HepG2 (cell line): ENCODE measurements at regions of chr9 and their contacts with region 1.

Region 1: DNA sequence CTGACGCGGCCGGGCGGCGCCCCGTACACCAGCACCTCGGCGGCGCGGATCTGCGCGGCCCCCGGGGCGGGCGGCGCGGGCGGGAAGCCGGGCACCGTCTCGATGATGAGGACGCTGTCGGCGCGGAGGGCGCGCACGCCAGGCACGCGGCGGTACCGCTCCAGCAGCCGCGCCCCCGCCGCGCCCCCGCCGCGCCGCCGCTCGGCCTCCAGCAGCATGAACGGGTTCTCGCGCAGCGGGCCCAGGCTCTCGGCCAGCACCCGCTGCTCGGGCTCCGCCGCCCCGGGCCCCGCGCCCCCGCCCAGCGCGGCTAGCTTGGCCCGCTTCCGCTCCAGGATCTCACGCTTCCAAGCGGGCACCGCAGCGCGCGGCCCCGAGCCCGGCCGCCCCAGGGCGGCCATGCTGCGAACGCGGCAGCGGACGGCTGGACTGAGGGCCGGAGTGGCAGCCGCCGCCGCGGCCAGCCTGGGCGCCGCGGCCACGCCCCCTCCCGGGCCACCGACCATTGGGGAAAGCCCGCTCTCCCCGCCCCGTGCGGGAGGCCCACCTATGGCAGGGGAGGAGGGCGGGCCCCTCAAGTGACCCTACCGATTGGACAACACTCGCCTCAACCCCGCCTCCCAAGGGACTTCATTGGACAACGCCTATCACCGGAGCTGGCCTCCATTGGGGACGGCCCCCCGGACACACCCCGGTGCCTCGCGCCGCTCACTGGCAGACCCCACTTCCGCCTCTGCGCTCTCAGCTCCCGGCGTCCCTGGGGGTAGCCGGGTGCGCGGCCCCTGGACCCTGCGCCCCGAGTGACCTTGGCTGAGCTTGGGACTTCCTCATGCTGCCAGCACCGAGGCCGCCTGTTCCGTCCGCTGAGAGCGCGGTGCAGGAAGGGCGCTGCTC is at the start of gene TPRN:
- DNase-seq: peak; percentile 99
- ATAC-seq: peak; percentile 87
- H3K4me3 ChIP-seq: peak within 1 kb of the TSS; percentile 71 to 78 (median 72)
- H3K27ac ChIP-seq: peak within 1 kb of the TSS; percentile 96
- H3K4me1 ChIP-seq: peaks cover 71% of the 10 kb centered on the region
- H3K27me3 ChIP-seq: no peaks in the 10 kb centered on the region; a peak in 1 of 5 replicates
- CTCF ChIP-seq: no peak
- EP300 ChIP-seq: 0 out of 4 replicates have a peak, but pooled peaks of 1 of the 2 experiments have one; percentile 15
- POLR2A ChIP-seq: peak in 1 of 2 experiments; percentile 77; a peak in 2 of 4 replicates
- RAD21 ChIP-seq: no peak; the same call in 1 of the 2 replicates
- total RNA-seq, gene TPRN: 17.5 and 19.2 TPM in 2 replicates

Region 2: DNA sequence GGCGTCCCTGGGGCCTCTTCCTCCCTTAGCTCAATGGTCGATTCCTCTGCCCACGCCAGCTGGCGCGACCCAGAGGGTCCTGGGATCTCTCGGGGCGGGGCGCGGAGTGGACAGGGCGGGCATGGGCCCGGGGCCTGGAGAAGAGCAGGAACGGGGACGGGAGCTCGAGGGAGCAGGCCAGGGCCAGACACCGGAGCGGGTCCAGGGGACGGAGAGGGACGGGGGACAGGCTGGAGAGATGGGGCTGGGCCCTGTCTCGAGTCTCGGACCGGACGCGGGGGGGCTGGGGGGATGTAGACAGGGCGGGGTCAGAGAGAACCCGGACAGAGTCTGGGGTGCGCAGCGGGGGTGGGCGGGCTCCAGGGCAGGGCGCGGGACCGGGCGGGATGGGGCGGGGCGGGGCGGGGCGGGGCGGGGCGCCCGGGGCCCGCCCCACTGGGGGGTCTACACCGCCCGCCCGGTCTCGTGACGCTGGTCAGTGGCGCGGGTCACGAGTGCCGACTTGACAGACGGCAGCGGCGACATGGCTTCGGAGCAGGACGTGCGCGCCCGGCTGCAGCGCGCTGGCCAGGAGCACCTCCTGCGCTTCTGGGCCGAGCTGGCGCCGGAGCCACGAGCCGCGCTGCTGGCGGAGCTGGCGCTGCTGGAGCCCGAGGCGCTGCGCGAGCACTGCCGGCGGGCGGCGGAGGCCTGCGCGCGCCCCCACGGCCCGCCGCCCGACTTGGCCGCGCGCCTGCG is 123.4 kb before region 1 on chr9 and contains the start of gene UAP1L1:
- CTCF ChIA-PET with region 1: no interaction called
- POLR2A ChIA-PET with region 1: no interaction called
- in situ Hi-C with region 1: no loop called
- intact Hi-C with region 1: no loop called
- DNase-seq: no peak
- ATAC-seq: peak; percentile 66
- H3K4me3 ChIP-seq: peak within 1 kb of the TSS; percentile 64 to 85 (median 76); a peak in 5 of 6 replicates
- H3K27ac ChIP-seq: peak within 1 kb of the TSS; percentile 43
- H3K4me1 ChIP-seq: peaks cover 42% of the 10 kb centered on the region
- H3K27me3 ChIP-seq: no peaks in the 10 kb centered on the region
- CTCF ChIP-seq: 0 out of 2 replicates have a peak, but pooled peaks have one; percentile 4
- EP300 ChIP-seq: no peak
- POLR2A ChIP-seq: no peak
- RAD21 ChIP-seq: peak; percentile 29; the same call in 1 of the 2 replicates
- total RNA-seq, gene UAP1L1: 6.2 and 6.4 TPM in 2 replicates

Region 3: DNA sequence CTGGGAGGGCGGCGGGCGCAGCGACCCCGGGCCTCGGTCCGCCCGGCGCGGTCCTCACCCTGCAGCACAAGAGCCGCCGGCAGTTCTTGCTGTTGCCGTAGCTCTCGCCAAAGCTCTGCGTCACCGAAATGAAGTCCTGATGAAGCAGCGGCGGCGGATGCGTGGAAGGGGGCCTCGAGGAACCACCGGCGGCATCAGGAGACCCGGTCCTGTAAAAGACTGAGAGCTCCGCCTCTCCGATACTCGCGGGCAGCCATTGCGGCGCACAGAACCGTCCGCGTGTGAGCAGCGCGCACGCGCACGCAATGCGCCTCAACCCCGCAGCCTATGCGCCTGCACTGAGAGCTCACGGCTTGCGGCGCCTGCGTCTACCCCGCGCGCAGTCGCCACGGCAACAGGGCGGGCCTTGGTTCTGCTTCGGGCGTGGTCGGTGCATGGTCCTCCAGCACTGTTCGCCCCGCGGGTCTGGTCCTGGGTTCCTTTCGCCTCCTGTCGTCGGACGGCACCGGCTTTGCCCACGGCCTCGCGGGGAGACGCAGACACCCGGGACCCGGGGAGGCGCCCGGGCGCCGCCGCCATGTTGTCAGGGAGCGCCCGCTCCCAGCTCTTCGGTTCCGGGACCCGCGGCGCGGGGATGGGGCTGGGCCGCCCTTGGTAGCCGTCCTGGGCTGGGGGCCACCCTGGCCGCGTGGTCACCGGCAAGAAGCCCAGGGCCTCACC is 70.9 kb before region 1 on chr9:
- CTCF ChIA-PET with region 1: no interaction called
- POLR2A ChIA-PET with region 1: interaction called, 22 read pairs
- in situ Hi-C with region 1: no loop called
- intact Hi-C with region 1: no loop called
- DNase-seq: peak; percentile 81
- ATAC-seq: peak; percentile 95
- H3K4me3 ChIP-seq: peak overlapping the region; percentile 75 to 90 (median 85)
- H3K27ac ChIP-seq: peak overlapping the region; percentile 82
- H3K4me1 ChIP-seq: peaks cover 24% of the 10 kb centered on the region
- H3K27me3 ChIP-seq: no peaks in the 10 kb centered on the region
- CTCF ChIP-seq: no peak; the same call in 1 of the 2 replicates
- EP300 ChIP-seq: no peak; a peak in 1 of 4 replicates
- POLR2A ChIP-seq: peak; percentile 73 to 91
- RAD21 ChIP-seq: peak; percentile 39

Region 4: DNA sequence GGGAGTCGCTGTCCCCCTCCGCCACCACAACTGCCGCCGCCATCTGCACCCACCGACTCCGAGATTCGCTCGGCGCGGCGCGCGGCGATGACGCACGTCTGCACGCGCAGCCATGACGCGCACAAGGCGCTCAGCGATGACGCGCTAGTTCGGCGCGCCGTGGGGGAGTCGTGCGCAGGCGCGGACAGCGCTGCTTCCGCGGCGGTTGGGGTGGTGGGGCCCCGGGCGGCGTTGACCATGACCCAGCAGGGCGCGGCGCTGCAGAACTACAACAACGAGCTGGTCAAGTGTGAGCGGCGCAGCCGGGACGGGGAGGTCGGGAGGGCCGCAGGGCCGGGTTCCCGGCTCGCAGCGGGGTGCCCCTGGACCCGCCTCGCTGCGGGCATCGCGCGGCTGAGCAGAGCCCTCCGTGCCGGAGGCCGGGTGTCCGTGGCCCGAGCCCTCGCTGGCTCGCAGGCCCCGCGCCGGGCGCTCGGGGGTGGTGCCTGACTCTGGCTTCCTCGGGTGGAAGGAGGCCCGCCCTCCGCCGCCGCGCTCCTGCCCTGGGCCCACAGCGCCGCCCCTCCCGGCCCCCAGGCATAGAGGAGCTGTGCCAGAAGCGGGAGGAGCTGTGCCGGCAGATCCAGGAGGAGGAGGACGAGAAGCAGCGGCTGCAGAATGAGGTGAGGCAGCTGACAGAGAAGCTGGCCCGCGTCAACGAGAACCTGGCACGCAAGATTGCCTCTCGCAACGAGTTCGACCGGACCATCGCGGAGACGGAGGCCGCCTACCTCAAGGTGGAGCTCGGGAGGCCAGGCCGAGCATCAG is 11.9 kb before region 1 on chr9 and contains the starts of genes ANAPC2 and SSNA1:
- CTCF ChIA-PET with region 1: interaction called, 4 read pairs
- POLR2A ChIA-PET with region 1: interaction called, 52 read pairs
- in situ Hi-C with region 1: no loop called
- intact Hi-C with region 1: loop called (anchors 2 kb)
- DNase-seq: peak; percentile 85
- ATAC-seq: peak; percentile 84
- H3K4me3 ChIP-seq: peak within 1 kb of the TSS; percentile 84 to 99 (median 97)
- H3K27ac ChIP-seq: peak within 1 kb of the TSS; percentile 81
- H3K4me1 ChIP-seq: peaks cover 28% of the 10 kb centered on the region
- H3K27me3 ChIP-seq: no peaks in the 10 kb centered on the region
- CTCF ChIP-seq: peak; percentile 88
- EP300 ChIP-seq: peak in 1 of 2 experiments; percentile 18; a peak in 1 of 4 replicates
- POLR2A ChIP-seq: peak in 1 of 2 experiments; percentile 41; a peak in 1 of 4 replicates
- RAD21 ChIP-seq: peak; percentile 92
- total RNA-seq, gene ANAPC2: 7.4 and 12.3 TPM in 2 replicates
- total RNA-seq, gene SSNA1: 41.2 and 49.4 TPM in 2 replicates

Region 5: DNA sequence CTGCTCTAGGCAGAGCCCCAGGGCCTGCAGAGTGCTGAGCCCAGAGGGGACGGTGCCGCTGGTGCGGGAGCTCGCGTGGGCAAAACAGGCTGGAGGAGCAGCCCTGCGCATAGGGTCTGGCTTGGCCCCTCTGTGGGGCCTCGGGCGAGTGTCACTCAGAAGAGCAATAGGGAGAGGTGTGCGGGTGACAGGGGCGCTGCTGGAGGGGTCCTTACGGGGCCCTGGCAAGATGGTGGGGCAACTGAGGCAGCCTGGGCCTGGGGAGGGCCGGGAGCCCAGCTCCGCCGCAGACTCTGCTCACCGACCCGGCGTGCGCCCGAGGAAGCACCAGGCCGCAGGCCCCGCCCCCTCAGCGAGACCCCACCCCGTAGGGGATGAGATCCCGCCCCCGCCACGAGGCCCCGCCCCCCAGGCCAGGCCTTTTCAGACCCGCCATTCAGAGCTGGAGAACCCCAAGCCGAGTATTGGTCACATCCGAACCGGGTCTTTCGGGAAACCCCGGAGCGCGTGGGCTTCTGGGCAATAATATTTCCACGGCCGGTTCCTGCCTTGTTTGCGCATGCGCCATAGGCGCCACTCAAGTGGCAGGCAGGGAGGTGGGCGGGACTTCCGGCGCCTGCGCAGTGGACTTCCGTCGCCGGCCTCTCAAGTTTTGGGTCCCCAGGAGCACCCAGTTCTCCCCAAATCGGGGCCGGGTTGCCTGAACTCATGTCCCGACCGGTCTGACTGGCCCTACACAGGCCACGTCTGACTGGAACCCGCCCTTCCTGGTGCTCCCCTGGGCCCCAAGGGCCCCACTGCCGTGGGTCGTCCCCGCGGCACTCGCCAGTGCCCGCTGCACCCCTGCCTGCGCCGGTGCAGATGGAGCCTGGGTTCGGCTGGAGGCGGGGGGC is 22.8 kb after region 1 on chr9:
- CTCF ChIA-PET with region 1: no interaction called
- POLR2A ChIA-PET with region 1: interaction called, 225 read pairs
- in situ Hi-C with region 1: no loop called
- intact Hi-C with region 1: loop called (anchors 2 kb)
- DNase-seq: peak; percentile 98
- ATAC-seq: peak; percentile 44
- H3K4me3 ChIP-seq: peak overlapping the region; percentile 84 to 99 (median 92)
- H3K27ac ChIP-seq: peak overlapping the region; percentile 76
- H3K4me1 ChIP-seq: peaks cover 64% of the 10 kb centered on the region
- H3K27me3 ChIP-seq: no peaks in the 10 kb centered on the region; a peak in 1 of 5 replicates
- CTCF ChIP-seq: no peak
- EP300 ChIP-seq: no peak
- POLR2A ChIP-seq: peak in 1 of 2 experiments; percentile 30; a peak in 1 of 4 replicates
- RAD21 ChIP-seq: peak; percentile 30; the same call in 1 of the 2 replicates

Region 6: GRCh38 chr9:137254624-137255447 is 54.3 kb after region 1 on chr9 and contains the start of gene NELFB:
- CTCF ChIA-PET with region 1: no interaction called
- POLR2A ChIA-PET with region 1: interaction called, 11 read pairs
- in situ Hi-C with region 1: no loop called
- intact Hi-C with region 1: no loop called
- DNase-seq: peak; percentile 76
- ATAC-seq: peak; percentile 53
- H3K4me3 ChIP-seq: peak within 1 kb of the TSS; percentile 91 to 98 (median 91)
- H3K27ac ChIP-seq: peak within 1 kb of the TSS; percentile 80
- H3K4me1 ChIP-seq: peaks cover 57% of the 10 kb centered on the region
- H3K27me3 ChIP-seq: no peaks in the 10 kb centered on the region; a peak in 1 of 5 replicates
- CTCF ChIP-seq: peak; percentile 50
- EP300 ChIP-seq: no peak
- POLR2A ChIP-seq: peak in 1 of 2 experiments; percentile 80; a peak in 2 of 4 replicates
- RAD21 ChIP-seq: peak; percentile 45; the same call in 1 of the 2 replicates
- total RNA-seq, gene NELFB: 38.7 and 45.8 TPM in 2 replicates

Region 7: GRCh38 chr9:137326445-137327065 is 126.0 kb after region 1 on chr9:
- CTCF ChIA-PET with region 1: no interaction called
- POLR2A ChIA-PET with region 1: no interaction called
- in situ Hi-C with region 1: no loop called
- intact Hi-C with region 1: no loop called
- DNase-seq: no peak
- ATAC-seq: no peak
- H3K4me3 ChIP-seq: no peak overlapping the region
- H3K27ac ChIP-seq: no peak overlapping the region
- H3K4me1 ChIP-seq: no peaks in the 10 kb centered on the region
- H3K27me3 ChIP-seq: peaks cover 2 to 3% of the 10 kb centered on the region in 2 experiments; a peak in 3 of 5 replicates
- CTCF ChIP-seq: no peak
- EP300 ChIP-seq: no peak
- POLR2A ChIP-seq: no peak
- RAD21 ChIP-seq: no peak